ENCODE measurements at regions of chr20 and their contacts with region 1.

Region 1: GRCh38 chr20:25390538-25391528 is at the start of gene ABHD12:
- DNase-seq: peak; percentile 80 to 93 (median 89)
- ATAC-seq: peak; percentile 96
- H3K4me3 ChIP-seq: peak within 1 kb of the TSS; percentile 62
- H3K4me3 Mint-ChIP-seq: peak within 1 kb of the TSS; percentile 83 to 94 (median 88)
- H3K27ac ChIP-seq: peak within 1 kb of the TSS; percentile 74
- H3K27ac Mint-ChIP-seq: peak within 1 kb of the TSS; percentile 46 to 96 (median 82)
- H3K4me1 ChIP-seq: no peaks in the 10 kb centered on the region
- H3K4me1 Mint-ChIP-seq: peaks cover 5 to 22% (median 18%) of the 10 kb centered on the region in 7 donors
- H3K27me3 ChIP-seq: no peaks in the 10 kb centered on the region
- H3K27me3 Mint-ChIP-seq: peaks cover 0 to 6% (median 0%) of the 10 kb centered on the region in 5 donors
- total RNA-seq, gene ABHD12: 16.5 to 27.6 (median 22.5) TPM

Region 2: GRCh38 chr20:23420943-23421931 is 1969.6 kb before region 1 on chr20 and contains the start of gene NAPB:
- CTCF ChIA-PET with region 1: no interaction called
- POLR2A ChIA-PET with region 1: no interaction called
- intact Hi-C with region 1: loop called in 1 of 2 experiments (anchors 10 kb)
- DNase-seq: peak; percentile 82 to 93 (median 91)
- ATAC-seq: peak; percentile 99
- H3K4me3 ChIP-seq: peak within 1 kb of the TSS; percentile 84
- H3K4me3 Mint-ChIP-seq: peak within 1 kb of the TSS; percentile 86 to 96 (median 92)
- H3K27ac ChIP-seq: peak within 1 kb of the TSS; percentile 87
- H3K27ac Mint-ChIP-seq: peak within 1 kb of the TSS; percentile 55 to 95 (median 89)
- H3K4me1 ChIP-seq: peaks cover 7 to 22% of the 10 kb centered on the region in 2 donors
- H3K4me1 Mint-ChIP-seq: peaks cover 21 to 55% (median 39%) of the 10 kb centered on the region in 7 donors
- H3K27me3 ChIP-seq: no peaks in the 10 kb centered on the region
- H3K27me3 Mint-ChIP-seq: peaks cover 0 to 11% (median 6%) of the 10 kb centered on the region in 5 donors
- total RNA-seq, gene NAPB: 11.4 to 20.4 (median 16.2) TPM

Region 3: DNA sequence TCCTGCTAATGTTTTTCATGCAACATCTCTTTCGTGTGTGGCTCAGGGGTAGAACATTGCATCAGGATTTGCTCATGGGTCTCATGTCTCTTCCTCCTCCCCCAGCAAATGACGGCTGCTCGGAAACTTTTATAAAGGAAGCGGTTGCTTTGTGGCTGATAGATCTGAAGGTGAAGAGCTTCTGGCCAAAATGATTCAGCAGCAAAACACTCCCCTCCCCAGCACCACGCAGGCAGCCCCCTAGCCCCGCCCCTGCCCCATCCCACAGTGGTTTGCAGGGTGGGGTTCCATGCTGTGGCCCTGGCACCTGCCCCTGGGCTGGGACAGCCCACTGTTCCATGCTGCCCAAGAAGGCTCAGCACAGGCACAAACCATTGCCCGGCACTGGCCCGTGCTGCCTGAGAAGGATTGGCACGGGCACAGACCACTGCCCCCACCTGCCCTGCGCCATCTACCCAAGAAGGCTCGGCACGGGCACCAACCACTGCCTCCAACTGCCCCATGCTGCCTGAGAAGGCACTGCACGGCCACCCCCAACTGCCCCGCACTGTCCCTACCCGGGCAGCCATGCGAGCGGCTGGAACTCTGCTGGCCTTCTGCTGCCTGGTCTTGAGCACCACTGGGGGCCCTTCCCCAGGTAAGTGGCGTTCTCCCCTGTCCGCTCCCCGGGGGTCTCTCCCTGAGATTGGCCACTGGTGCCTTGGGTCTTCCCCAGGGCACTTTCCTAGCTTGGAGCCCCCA is 441.7 kb before region 1 on chr20 and contains the start of gene CST7:
- CTCF ChIA-PET with region 1: no interaction called
- POLR2A ChIA-PET with region 1: no interaction called
- intact Hi-C with region 1: loop called in 1 of 2 experiments (anchors 1 kb)
- DNase-seq: peak; percentile 33 to 85 (median 77)
- ATAC-seq: peak; percentile 90
- H3K4me3 ChIP-seq: peak within 1 kb of the TSS; percentile 66
- H3K4me3 Mint-ChIP-seq: peak within 1 kb of the TSS in 9 of 10 donors; percentile 27 to 94 (median 54)
- H3K27ac ChIP-seq: no peak within 1 kb of the TSS
- H3K27ac Mint-ChIP-seq: peak within 1 kb of the TSS; percentile 21 to 94 (median 80)
- H3K4me1 ChIP-seq: peaks cover 6 to 33% of the 10 kb centered on the region in 2 donors
- H3K4me1 Mint-ChIP-seq: peaks cover 12 to 75% (median 25%) of the 10 kb centered on the region in 7 donors
- H3K27me3 ChIP-seq: no peaks in the 10 kb centered on the region
- H3K27me3 Mint-ChIP-seq: no peaks in the 10 kb centered on the region
- total RNA-seq, gene CST7: 1.4 to 74.9 (median 11.5) TPM

Region 4: GRCh38 chr20:25310268-25310920 is 80.4 kb before region 1 on chr20:
- CTCF ChIA-PET with region 1: no interaction called
- POLR2A ChIA-PET with region 1: no interaction called
- intact Hi-C with region 1: loop called (anchors 1 kb)
- DNase-seq: peak in 4 of 9 donors; percentile 12 to 64 (median 18)
- ATAC-seq: peak; percentile 87
- H3K4me3 ChIP-seq: peak overlapping the region; percentile 18
- H3K4me3 Mint-ChIP-seq: peak overlapping the region; percentile 8 to 88 (median 76)
- H3K27ac ChIP-seq: peak overlapping the region; percentile 31
- H3K27ac Mint-ChIP-seq: peak overlapping the region; percentile 68 to 97 (median 85)
- H3K4me1 ChIP-seq: peaks cover 3 to 8% of the 10 kb centered on the region in 2 donors
- H3K4me1 Mint-ChIP-seq: peaks cover 15 to 38% (median 20%) of the 10 kb centered on the region in 7 donors
- H3K27me3 ChIP-seq: no peaks in the 10 kb centered on the region
- H3K27me3 Mint-ChIP-seq: no peaks in the 10 kb centered on the region

Region 5: GRCh38 chr20:25623736-25624499 is 233.1 kb after region 1 on chr20 and contains the start of gene NANP:
- CTCF ChIA-PET with region 1: no interaction called
- POLR2A ChIA-PET with region 1: no interaction called
- intact Hi-C with region 1: loop called (anchors 1 to 5 kb)
- DNase-seq: peak; percentile 62 to 92 (median 73)
- ATAC-seq: peak; percentile 86
- H3K4me3 ChIP-seq: peak within 1 kb of the TSS; percentile 96
- H3K4me3 Mint-ChIP-seq: peak within 1 kb of the TSS; percentile 86 to 96 (median 94)
- H3K27ac ChIP-seq: peak within 1 kb of the TSS; percentile 70
- H3K27ac Mint-ChIP-seq: peak within 1 kb of the TSS; percentile 78 to 96 (median 90)
- H3K4me1 ChIP-seq: peaks cover 0 to 12% of the 10 kb centered on the region in 2 donors
- H3K4me1 Mint-ChIP-seq: peaks cover 14 to 34% (median 18%) of the 10 kb centered on the region in 7 donors
- H3K27me3 ChIP-seq: no peaks in the 10 kb centered on the region
- H3K27me3 Mint-ChIP-seq: peaks cover 0 to 3% (median 0%) of the 10 kb centered on the region in 5 donors
- total RNA-seq, gene NANP: 1.0 to 7.0 (median 1.9) TPM

Measured in naive thymus-derived CD4-positive, alpha-beta T cell (primary cell).